ENCODE measurements at regions of chr3 and their contacts with region 1.

Region 1: GRCh38 chr3:184568924-184569829 is 7.6 kb downstream of the EPHB3 start:
- DNase-seq: peak; percentile 93

Region 2: DNA sequence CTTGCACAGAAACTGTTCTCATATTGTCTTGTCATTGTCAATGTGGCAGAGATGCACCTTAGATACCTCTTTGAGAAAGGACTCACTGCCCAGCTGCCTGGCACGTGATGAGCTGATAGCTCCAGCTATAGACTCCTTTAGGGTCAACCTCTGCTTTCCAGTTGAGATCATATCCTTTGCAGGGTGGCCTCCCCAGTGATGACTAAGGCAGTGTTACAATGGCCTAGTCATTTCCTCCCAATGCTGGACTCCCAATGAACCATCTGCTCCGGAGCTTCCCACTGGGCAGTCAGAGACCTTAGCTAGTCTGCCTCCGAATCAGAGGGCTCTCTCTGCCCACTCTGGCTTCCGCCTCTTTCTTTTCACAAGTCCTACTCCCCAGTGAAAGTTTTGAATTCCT is 109.8 kb before region 1 on chr3:
- intact Hi-C with region 1: no loop called
- DNase-seq: no peak

Region 3: GRCh38 chr3:184636741-184637316 is 67.7 kb after region 1 on chr3:
- intact Hi-C with region 1: no loop called
- DNase-seq: no peak

Region 4: DNA sequence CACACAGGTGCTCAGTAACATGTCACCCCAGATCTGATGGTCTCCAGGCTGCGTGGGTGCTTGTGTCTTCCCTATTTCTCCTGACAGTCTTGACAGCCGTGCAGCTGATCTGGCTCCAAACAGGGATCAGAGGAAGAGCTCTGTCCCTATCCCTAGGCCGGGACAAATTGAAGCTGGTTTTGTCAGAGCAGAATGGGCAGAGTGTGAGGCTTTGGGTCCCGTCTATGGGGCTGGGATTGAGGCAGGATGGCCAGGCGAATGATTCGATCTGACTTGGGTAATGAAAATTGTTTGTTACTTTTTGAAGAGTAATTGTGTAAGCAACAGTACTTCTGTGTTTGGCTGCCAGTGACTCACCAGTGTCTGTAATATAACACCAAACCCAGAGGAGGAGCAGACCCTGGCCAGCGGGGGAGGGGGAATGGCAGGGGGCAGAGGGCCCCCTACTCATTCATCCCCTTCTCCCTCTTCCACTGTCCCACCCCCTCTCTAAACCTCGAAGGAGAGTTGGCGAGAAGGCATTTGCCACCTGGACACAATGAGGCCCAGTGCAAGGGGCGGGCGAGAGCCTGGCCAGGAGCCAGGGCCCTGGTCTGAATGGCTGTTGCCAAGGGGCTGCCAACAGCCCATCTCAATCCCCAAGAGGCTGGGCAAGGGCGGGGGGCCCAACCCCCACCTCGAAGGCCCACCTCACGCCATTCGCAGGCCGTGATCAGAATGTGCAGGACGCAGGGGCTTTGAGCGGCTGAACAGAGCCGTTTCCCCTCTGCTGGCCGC is 147.6 kb after region 1 on chr3:
- intact Hi-C with region 1: loop called in 1 of 2 experiments (anchors 5 kb)
- DNase-seq: peak; percentile 80

Measured in posterior vena cava (tissue), 2 donors.